ENCODE measurements at regions of chr4 and their contacts with region 1.

Region 1: DNA sequence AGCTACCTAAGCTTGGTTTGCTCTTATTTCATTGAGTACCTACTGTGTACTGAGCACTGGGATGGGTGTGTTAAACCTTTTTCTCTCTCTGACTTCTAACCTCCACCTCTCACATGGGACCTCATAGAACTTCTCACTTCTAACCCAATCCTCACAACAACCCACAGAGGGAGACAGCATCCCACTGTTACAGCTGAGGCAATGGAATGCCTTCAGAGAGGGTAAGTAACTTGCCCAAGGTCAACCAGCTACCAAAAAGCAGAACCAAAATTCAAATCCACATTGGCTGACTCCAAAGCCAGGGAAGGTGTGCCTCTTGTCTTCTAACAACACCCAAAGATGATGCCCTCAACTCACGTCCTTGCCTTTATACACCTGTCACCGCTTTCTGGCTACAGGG is 5.4 kb downstream of the SEL1L3 start:
- DNase-seq: no peak
- H3K4me3 ChIP-seq: no peak overlapping the region
- H3K27ac ChIP-seq: no peak overlapping the region
- H3K4me1 ChIP-seq: peaks cover 0 to 17% (median 3%) of the 10 kb centered on the region in 4 experiments; a peak in 3 of 7 replicates
- H3K27me3 ChIP-seq: no peaks in the 10 kb centered on the region
- CTCF ChIP-seq: peak in 2 of 3 experiments; percentile 32 to 43; a peak in 3 of 4 replicates
- EP300 ChIP-seq: no peak
- POLR2A ChIP-seq: no peak
- RAD21 ChIP-seq: peak; percentile 59 to 68

Region 2: DNA sequence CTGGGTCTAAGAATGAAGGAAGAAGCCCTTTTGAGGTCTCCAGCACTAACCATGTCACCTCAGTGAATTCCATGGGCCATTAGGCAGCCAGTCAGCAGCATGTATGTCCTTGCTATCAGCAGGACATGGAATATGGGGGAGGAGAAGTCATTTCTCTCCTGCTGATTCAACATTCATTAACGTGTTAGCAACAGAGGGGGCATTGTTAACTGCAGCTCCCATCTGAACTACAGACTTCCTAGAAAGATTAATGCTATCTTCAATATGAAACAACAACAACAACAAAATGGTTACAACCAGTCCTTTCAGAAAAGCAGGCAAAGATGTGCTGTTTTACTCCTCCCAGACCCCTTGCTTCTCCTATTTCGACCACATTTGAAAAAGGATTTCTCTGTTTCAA is 322.1 kb before region 1 on chr4:
- CTCF ChIA-PET with region 1: no interaction called
- POLR2A ChIA-PET with region 1: no interaction called
- DNase-seq: no peak
- H3K4me3 ChIP-seq: no peak overlapping the region
- H3K27ac ChIP-seq: no peak overlapping the region
- H3K4me1 ChIP-seq: no peaks in the 10 kb centered on the region
- H3K27me3 ChIP-seq: no peaks in the 10 kb centered on the region
- CTCF ChIP-seq: no peak
- EP300 ChIP-seq: no peak
- POLR2A ChIP-seq: no peak
- RAD21 ChIP-seq: no peak

Region 3: GRCh38 chr4:25842229-25842845 is 15.1 kb before region 1 on chr4:
- CTCF ChIA-PET with region 1: interaction called, 26 read pairs
- POLR2A ChIA-PET with region 1: interaction called, 4 read pairs
- DNase-seq: peak in 1 of 2 experiments; percentile 63
- H3K4me3 ChIP-seq: no peak overlapping the region
- H3K27ac ChIP-seq: no peak overlapping the region
- H3K4me1 ChIP-seq: peaks cover 10 to 32% (median 23%) of the 10 kb centered on the region in 4 experiments
- H3K27me3 ChIP-seq: peaks cover 0 to 1% (median 0%) of the 10 kb centered on the region in 4 experiments; a peak in 1 of 7 replicates
- CTCF ChIP-seq: peak; percentile 48 to 60 (median 52)
- EP300 ChIP-seq: no peak
- POLR2A ChIP-seq: no peak
- RAD21 ChIP-seq: peak; percentile 75 to 80